PC-9 (cell line): ENCODE measurements at regions of chr17 and their contacts with region 1.

Region 1: DNA sequence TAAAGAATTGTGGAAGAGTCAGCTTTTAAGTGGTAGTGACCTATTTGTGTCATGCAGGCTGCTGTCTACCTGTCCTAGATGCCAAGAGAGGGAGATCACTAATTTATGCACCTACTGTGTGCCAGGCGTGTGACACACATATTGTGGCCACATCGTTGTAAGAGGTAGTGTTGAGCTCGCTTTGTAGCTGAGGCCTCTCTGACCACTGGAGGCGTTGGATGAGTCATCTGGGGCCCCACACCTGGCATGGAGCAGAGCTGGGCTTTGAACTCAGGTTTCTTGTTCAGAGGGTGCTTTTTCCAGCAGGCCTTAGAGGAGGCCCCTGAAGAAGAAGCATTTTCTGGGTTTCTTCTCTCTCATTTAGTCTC is 52.3 kb upstream of the LGALS9 start:
- DNase-seq: no peak
- H3K4me3 ChIP-seq: no peak overlapping the region
- H3K27ac ChIP-seq: no peak overlapping the region
- H3K4me1 ChIP-seq: peaks cover 37% of the 10 kb centered on the region
- H3K27me3 ChIP-seq: no peaks in the 10 kb centered on the region
- CTCF ChIP-seq: no peak

Region 2: GRCh38 chr17:27473748-27474609 is 104.7 kb before region 1 on chr17:
- CTCF ChIA-PET with region 1: no interaction called
- POLR2A ChIA-PET with region 1: interaction called, 18 read pairs
- intact Hi-C with region 1: no loop called
- DNase-seq: peak in 1 of 2 experiments; percentile 17
- H3K4me3 ChIP-seq: no peak overlapping the region
- H3K27ac ChIP-seq: peak overlapping the region; percentile 95
- H3K4me1 ChIP-seq: peaks cover 41% of the 10 kb centered on the region
- H3K27me3 ChIP-seq: no peaks in the 10 kb centered on the region
- CTCF ChIP-seq: no peak

Region 3: GRCh38 chr17:27559506-27560481 is 18.9 kb before region 1 on chr17:
- CTCF ChIA-PET with region 1: no interaction called
- POLR2A ChIA-PET with region 1: no interaction called
- intact Hi-C with region 1: no loop called
- DNase-seq: no peak
- H3K4me3 ChIP-seq: no peak overlapping the region
- H3K27ac ChIP-seq: no peak overlapping the region
- H3K4me1 ChIP-seq: no peaks in the 10 kb centered on the region
- H3K27me3 ChIP-seq: no peaks in the 10 kb centered on the region
- CTCF ChIP-seq: no peak